ENCODE measurements at regions of chr3 and their contacts with region 1.

Region 1: GRCh38 chr3:72447059-72447946 is 400.9 kb downstream of the SHQ1 start:
- DNase-seq: peak; percentile 50 to 93
- H3K4me3 ChIP-seq: peak overlapping the region; percentile 66
- H3K27ac ChIP-seq: peak overlapping the region; percentile 61; the same call in 1 of the 2 replicates
- H3K4me1 ChIP-seq: peaks cover 23% of the 10 kb centered on the region
- H3K27me3 ChIP-seq: no peaks in the 10 kb centered on the region
- CTCF ChIP-seq: no peak

Region 2: DNA sequence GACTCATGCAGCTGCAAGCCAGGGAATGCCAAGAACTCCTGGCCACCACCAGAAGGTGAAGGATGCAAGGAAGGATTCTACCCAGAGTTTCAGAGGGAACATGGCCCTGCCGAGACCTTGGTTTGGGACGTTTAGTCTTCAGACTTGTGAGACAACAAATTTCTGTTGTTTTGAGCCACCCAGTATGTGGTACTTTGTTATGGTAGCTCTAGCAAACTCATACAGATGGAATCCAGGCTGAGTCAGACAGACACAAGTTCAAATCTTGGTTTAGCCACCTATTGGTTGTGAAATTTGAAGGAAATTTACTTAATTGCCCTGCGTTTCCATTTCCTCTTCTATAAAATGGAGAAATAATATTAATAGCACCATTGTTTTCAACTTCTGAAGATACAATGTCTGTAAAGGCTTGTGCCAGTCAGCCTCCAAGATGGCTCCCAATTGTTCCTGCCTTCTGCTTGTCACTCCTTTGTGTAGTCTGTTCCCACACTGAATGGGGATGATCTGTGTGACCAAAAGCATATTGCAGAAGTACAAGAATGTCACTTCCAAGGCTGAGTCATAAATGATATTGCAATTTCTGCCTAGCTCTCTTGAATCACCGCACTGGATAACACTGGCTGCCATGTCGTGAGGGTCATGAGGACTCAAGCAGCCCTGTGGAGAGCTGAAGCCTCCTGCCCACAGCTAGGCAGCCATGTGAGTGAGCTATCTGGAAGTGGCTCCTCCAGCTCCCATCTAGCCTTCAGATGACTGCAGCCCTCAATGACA is 438.9 kb before region 1 on chr3:
- CTCF ChIA-PET with region 1: no interaction called
- POLR2A ChIA-PET with region 1: no interaction called
- intact Hi-C with region 1: no loop called
- DNase-seq: no peak
- H3K4me3 ChIP-seq: no peak overlapping the region
- H3K27ac ChIP-seq: no peak overlapping the region
- H3K4me1 ChIP-seq: no peaks in the 10 kb centered on the region
- H3K27me3 ChIP-seq: peaks cover 6% of the 10 kb centered on the region; the same call in 1 of the 2 replicates
- CTCF ChIP-seq: no peak

Region 3: DNA sequence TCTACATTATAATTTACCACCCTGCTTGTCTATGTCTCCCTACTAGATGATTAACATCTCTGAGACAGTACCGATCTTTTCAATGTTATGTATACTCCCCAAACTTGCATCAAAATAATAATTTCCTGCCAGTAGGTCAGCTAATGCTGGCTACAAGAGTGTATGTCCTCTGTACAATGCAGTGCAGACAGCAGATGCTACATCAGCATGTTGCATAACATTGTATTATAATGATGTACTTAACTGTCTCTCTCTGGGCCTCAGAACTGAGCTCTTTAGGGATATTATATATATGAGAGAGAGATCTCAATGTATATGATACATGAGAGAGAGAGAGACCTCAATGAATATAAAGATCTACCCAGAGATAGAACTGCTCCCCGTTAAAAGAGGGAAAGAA is 55.6 kb before region 1 on chr3:
- CTCF ChIA-PET with region 1: interaction called, 11 read pairs
- POLR2A ChIA-PET with region 1: no interaction called
- intact Hi-C with region 1: no loop called
- DNase-seq: no peak
- H3K4me3 ChIP-seq: no peak overlapping the region
- H3K27ac ChIP-seq: no peak overlapping the region
- H3K4me1 ChIP-seq: no peaks in the 10 kb centered on the region
- H3K27me3 ChIP-seq: no peaks in the 10 kb centered on the region
- CTCF ChIP-seq: no peak

Region 4: GRCh38 chr3:72560846-72561675 is 113.8 kb after region 1 on chr3:
- CTCF ChIA-PET with region 1: no interaction called
- POLR2A ChIA-PET with region 1: no interaction called
- intact Hi-C with region 1: no loop called
- DNase-seq: no peak
- H3K4me3 ChIP-seq: no peak overlapping the region
- H3K27ac ChIP-seq: no peak overlapping the region
- H3K4me1 ChIP-seq: peaks cover 7% of the 10 kb centered on the region; the same call in 1 of the 2 replicates
- H3K27me3 ChIP-seq: no peaks in the 10 kb centered on the region
- CTCF ChIP-seq: no peak

Region 5: DNA sequence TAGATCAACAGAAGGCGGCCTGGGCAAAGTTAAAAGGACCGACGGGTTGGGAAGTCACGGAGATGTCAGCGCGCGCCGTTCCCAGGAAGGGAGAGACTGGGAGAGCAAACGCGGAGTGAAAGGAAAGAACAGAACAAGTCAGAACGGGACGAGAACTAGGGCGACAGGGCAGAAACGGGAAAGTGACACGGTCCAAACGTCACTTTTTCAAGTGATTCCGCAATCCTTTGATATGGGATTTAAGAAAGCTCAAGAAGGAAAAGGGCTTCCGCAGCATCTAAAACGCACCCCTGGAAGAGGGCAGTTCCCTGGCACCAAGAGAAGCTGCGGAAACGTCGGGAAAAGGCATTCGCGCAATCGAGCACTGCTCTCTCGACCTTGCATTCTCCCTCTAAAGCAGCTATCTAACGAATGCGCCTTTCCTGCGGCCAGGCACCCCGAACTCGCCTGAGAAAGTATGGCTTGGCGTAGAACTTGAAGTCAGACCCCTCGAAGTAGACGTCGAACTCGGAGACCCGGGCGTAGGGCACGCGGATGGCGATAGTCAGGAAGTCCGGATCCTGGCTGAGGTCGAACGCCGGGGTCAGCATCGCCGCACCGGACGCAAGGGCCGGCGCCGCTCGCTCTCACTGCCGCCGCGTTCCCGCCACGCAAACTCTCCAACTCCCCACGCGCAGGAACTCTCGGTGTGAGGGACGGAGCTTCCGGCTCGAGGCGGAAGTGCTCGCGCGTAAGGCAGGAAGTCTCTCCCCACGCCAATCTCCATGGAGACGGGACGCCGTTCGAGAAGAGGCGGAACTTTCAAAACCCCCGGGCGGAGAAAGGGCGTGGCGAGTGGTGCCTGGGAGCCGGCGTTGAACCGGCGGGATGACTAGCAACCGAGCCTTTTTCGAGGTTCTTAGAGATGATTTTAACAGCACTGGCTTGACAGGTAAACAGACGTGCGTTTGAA is 400.7 kb after region 1 on chr3 and contains the start of gene SHQ1:
- CTCF ChIA-PET with region 1: no interaction called
- POLR2A ChIA-PET with region 1: no interaction called
- intact Hi-C with region 1: no loop called
- DNase-seq: peak; percentile 80 to 93
- H3K4me3 ChIP-seq: peak within 1 kb of the TSS; percentile 81
- H3K27ac ChIP-seq: no peak within 1 kb of the TSS
- H3K4me1 ChIP-seq: peaks cover 20% of the 10 kb centered on the region; the same call in 1 of the 2 replicates
- H3K27me3 ChIP-seq: no peaks in the 10 kb centered on the region
- CTCF ChIP-seq: no peak
- total RNA-seq, gene SHQ1: 24.4 and 24.8 TPM in 2 replicates

Measured in PC-9 (cell line).